Activated CD8-positive, alpha-beta memory T cell treated with anti-CD3 and anti-CD28 coated beads, Interleukin-2, amount 10 ng/mL, durations not matched to agents 7 days and 5 days (primary cell): ENCODE measurements at regions of chr5 and their contacts with region 1.

Region 1: GRCh38 chr5:132369474-132370180 is at the start of gene SLC22A5:
- DNase-seq: peak; percentile 73
- ATAC-seq: peak; percentile 97
- H3K4me3 Mint-ChIP-seq: peak within 1 kb of the TSS; percentile 75
- H3K27ac Mint-ChIP-seq: peak within 1 kb of the TSS; percentile 52
- H3K4me1 Mint-ChIP-seq: peaks cover 20% of the 10 kb centered on the region
- H3K27me3 Mint-ChIP-seq: no peaks in the 10 kb centered on the region
- total RNA-seq, gene SLC22A5: 3.9 to 4.5 TPM

Region 2: GRCh38 chr5:132260714-132261551 is 108.7 kb before region 1 on chr5:
- CTCF ChIA-PET with region 1: no interaction called
- DNase-seq: peak; percentile 41
- ATAC-seq: peak; percentile 21
- H3K4me3 Mint-ChIP-seq: no peak overlapping the region
- H3K27ac Mint-ChIP-seq: no peak overlapping the region
- H3K4me1 Mint-ChIP-seq: peaks cover 20% of the 10 kb centered on the region
- H3K27me3 Mint-ChIP-seq: peaks cover 13% of the 10 kb centered on the region

Region 3: DNA sequence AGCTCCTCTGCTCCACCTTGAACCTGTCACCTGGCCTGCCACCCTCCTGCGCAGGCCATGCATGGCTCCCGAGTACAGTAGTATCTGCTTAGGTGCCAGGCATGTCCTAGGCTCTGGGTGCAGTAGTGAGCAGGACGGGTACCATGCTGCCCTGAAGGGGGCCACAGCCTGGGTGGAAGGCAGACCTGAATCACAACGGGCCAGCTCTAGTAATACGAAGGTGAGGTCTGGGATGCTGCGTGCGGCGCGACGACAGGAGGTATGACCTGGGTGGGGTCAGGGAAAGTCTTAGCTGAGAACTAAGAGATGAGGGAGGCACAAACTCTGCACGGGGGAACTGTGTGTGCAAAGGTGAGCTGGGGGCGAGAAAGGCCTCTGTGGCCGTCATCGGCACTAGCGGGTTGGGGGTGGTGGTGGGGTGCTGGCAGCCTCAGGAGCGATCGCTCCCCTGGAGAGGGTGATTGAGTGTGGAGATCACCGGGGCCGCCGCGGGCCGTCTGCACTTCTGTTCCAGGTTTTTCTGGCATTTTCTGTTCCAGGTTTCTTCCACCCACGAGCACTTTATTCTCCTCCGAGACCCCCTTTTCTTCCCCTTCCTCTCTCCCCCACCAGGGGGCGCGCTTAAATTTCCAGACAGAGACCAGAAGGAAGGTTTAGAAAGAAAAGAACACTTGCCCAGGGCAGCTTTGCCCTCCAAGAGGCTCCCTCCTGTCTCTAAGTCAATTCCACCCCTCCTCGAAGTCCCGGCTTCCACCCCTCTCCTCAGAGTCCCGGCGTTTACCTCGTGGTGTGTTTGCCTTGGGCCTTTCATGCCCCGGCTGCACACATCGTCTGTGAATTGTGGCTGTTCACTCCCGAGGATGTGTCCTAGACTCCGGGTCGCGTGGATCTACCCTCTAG is 97.1 kb before region 1 on chr5:
- CTCF ChIA-PET with region 1: interaction called, 16 read pairs
- DNase-seq: peak; percentile 70
- ATAC-seq: peak; percentile 45
- H3K4me3 Mint-ChIP-seq: no peak overlapping the region
- H3K27ac Mint-ChIP-seq: no peak overlapping the region
- H3K4me1 Mint-ChIP-seq: peaks cover 5% of the 10 kb centered on the region
- H3K27me3 Mint-ChIP-seq: peaks cover 8% of the 10 kb centered on the region